Activated B cell treated with CpG ODN at 0.5 μM for 24 hours (primary cell): ENCODE measurements at regions of chr7 and their contacts with region 1.

Region 1: GRCh38 chr7:50266635-50267386 is 37.7 kb upstream of the IKZF1 start:
- DNase-seq: no peak
- ATAC-seq: peak; percentile 66
- H3K4me3 Mint-ChIP-seq: peak overlapping the region; percentile 78
- H3K27ac Mint-ChIP-seq: peak overlapping the region; percentile 87
- H3K4me1 Mint-ChIP-seq: peaks cover 99% of the 10 kb centered on the region
- H3K27me3 Mint-ChIP-seq: no peaks in the 10 kb centered on the region
- CTCF ChIP-seq: no peak

Region 2: GRCh38 chr7:49885593-49886285 is 381.1 kb before region 1 on chr7:
- CTCF ChIA-PET with region 1: no interaction called
- POLR2A ChIA-PET with region 1: no interaction called
- intact Hi-C with region 1: no loop called
- DNase-seq: no peak
- ATAC-seq: no peak
- H3K4me3 Mint-ChIP-seq: no peak overlapping the region
- H3K27ac Mint-ChIP-seq: no peak overlapping the region
- H3K4me1 Mint-ChIP-seq: no peaks in the 10 kb centered on the region
- H3K27me3 Mint-ChIP-seq: peaks cover 4% of the 10 kb centered on the region
- CTCF ChIP-seq: no peak

Region 3: GRCh38 chr7:49937608-49938007 is 329.2 kb before region 1 on chr7:
- CTCF ChIA-PET with region 1: no interaction called
- POLR2A ChIA-PET with region 1: no interaction called
- intact Hi-C with region 1: no loop called
- DNase-seq: no peak
- ATAC-seq: no peak
- H3K4me3 Mint-ChIP-seq: no peak overlapping the region
- H3K27ac Mint-ChIP-seq: no peak overlapping the region
- H3K4me1 Mint-ChIP-seq: no peaks in the 10 kb centered on the region
- H3K27me3 Mint-ChIP-seq: no peaks in the 10 kb centered on the region
- CTCF ChIP-seq: no peak

Region 4: GRCh38 chr7:50147951-50148808 is 118.6 kb before region 1 on chr7:
- CTCF ChIA-PET with region 1: interaction called, 3 read pairs
- POLR2A ChIA-PET with region 1: interaction called, 6 read pairs
- intact Hi-C with region 1: loop called (anchors 5 kb)
- DNase-seq: no peak
- ATAC-seq: peak; percentile 77
- H3K4me3 Mint-ChIP-seq: peak overlapping the region; percentile 46
- H3K27ac Mint-ChIP-seq: peak overlapping the region; percentile 95
- H3K4me1 Mint-ChIP-seq: peaks cover 93% of the 10 kb centered on the region
- H3K27me3 Mint-ChIP-seq: no peaks in the 10 kb centered on the region
- CTCF ChIP-seq: no peak

Region 5: GRCh38 chr7:50212666-50213621 is 53.9 kb before region 1 on chr7:
- CTCF ChIA-PET with region 1: interaction called, 6 read pairs
- POLR2A ChIA-PET with region 1: interaction called, 26 read pairs
- intact Hi-C with region 1: loop called (anchors 2 kb)
- DNase-seq: no peak
- ATAC-seq: peak; percentile 91
- H3K4me3 Mint-ChIP-seq: peak overlapping the region; percentile 70
- H3K27ac Mint-ChIP-seq: peak overlapping the region; percentile 84
- H3K4me1 Mint-ChIP-seq: peaks cover 63% of the 10 kb centered on the region
- H3K27me3 Mint-ChIP-seq: no peaks in the 10 kb centered on the region
- CTCF ChIP-seq: no peak

Region 6: DNA sequence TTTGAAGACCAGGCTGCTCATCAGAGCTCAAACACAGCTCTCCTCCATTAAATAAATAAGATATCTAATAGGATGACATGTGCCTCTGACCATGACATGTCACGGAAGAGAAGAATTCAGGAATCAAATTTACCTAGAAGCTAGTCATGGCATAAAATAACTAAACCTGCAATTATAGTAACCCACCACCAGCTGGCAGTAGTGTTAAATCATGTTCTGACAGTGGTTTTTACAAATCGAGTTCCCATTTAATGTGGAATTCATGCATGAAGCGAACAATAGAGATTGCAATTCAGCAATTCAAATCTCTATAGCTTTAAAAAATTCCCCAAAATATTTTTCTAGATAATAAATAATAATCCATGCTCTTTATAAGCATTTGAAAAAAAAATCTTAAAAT is 36.8 kb before region 1 on chr7:
- CTCF ChIA-PET with region 1: no interaction called
- POLR2A ChIA-PET with region 1: no interaction called
- intact Hi-C with region 1: loop called (anchors 5 kb)
- DNase-seq: no peak
- ATAC-seq: no peak
- H3K4me3 Mint-ChIP-seq: no peak overlapping the region
- H3K27ac Mint-ChIP-seq: no peak overlapping the region
- H3K4me1 Mint-ChIP-seq: peaks cover 5% of the 10 kb centered on the region
- H3K27me3 Mint-ChIP-seq: no peaks in the 10 kb centered on the region
- CTCF ChIP-seq: no peak

Region 7: DNA sequence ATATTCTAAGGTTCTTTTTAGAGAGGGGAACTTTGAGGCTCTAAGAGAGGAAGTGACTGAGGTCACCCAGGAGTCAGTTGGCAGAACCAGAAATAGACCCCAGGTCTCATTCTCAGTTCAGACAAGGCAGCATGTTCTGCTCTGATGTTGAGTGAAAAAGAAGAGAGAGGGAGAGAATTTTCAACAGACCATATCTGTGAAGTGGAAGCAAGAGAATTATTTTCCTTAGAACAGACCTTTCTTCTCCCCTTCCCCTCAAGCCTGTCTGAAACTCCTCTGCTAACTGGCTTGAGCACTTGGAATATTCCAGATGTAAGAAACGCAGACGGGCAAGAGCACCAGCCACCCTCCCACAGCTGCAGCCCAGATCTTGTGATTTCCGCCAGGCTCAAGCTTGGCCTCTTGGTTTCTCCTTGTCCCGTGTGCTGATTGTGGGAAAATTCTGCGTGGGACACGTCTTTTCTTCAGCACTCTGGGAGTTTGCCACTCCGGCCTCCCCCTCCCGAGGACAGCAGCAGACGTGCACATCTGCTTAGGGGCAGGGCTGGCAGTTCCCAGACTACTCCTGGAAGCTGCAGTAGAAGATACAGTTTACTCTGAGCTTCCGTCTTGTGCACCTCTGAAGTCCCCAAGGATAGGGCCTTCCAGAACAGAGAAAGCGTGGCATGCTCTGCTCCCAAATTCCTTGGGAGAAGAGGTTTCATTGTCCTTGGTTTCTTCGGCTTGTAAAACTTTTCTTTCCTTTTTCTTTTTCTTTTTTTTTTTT is 15.1 kb after region 1 on chr7:
- CTCF ChIA-PET with region 1: interaction called, 10 read pairs
- POLR2A ChIA-PET with region 1: interaction called, 90 read pairs
- intact Hi-C with region 1: loop called (anchors 2 kb)
- DNase-seq: no peak
- ATAC-seq: peak; percentile 89
- H3K4me3 Mint-ChIP-seq: peak overlapping the region; percentile 84
- H3K27ac Mint-ChIP-seq: peak overlapping the region; percentile 94
- H3K4me1 Mint-ChIP-seq: peaks cover 83% of the 10 kb centered on the region
- H3K27me3 Mint-ChIP-seq: no peaks in the 10 kb centered on the region
- CTCF ChIP-seq: no peak

Region 8: DNA sequence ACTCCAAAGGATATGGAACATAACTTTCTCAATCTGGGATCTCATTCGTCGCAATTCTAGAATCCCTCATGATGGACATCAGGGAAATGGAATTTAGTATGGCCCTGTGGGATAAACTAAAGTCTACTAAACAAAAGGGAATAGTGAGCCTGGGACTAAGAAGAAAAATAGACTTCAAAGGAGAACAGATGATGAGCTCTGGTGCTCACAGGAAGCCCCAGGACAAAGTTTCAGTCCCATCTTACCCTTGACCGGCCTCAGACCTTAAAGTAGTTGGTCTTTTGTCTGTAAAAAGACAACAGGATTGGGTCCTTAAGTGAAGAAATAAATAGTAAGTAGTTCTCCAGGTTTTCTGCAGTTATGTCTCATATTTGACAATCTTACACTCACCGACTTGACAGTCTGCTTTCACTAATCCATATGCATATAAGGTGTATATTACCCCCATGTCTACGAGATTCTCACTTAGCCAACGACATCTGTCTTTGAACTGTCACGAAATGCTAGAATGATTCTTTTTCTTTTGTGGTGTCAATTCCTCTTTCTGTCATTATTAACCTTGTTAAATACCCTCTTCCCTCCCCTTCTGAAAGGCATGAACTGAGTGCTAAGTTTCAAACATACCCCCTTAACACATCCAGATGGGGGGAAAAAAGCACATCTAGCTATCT is 26.8 kb after region 1 on chr7:
- CTCF ChIA-PET with region 1: interaction called, 4 read pairs
- POLR2A ChIA-PET with region 1: interaction called, 18 read pairs
- intact Hi-C with region 1: loop called (anchors 1 kb)
- DNase-seq: no peak
- ATAC-seq: peak; percentile 76
- H3K4me3 Mint-ChIP-seq: peak overlapping the region; percentile 9
- H3K27ac Mint-ChIP-seq: peak overlapping the region; percentile 85
- H3K4me1 Mint-ChIP-seq: peaks cover 33% of the 10 kb centered on the region
- H3K27me3 Mint-ChIP-seq: no peaks in the 10 kb centered on the region
- CTCF ChIP-seq: no peak

Region 9: GRCh38 chr7:50409856-50410745 is 143.3 kb after region 1 on chr7:
- CTCF ChIA-PET with region 1: no interaction called
- POLR2A ChIA-PET with region 1: interaction called, 4 read pairs
- intact Hi-C with region 1: loop called (anchors 5 kb)
- DNase-seq: peak; percentile 58
- ATAC-seq: peak; percentile 70
- H3K4me3 Mint-ChIP-seq: peak overlapping the region; percentile 56
- H3K27ac Mint-ChIP-seq: peak overlapping the region; percentile 94
- H3K4me1 Mint-ChIP-seq: peaks cover 98% of the 10 kb centered on the region
- H3K27me3 Mint-ChIP-seq: no peaks in the 10 kb centered on the region
- CTCF ChIP-seq: no peak

Region 10: DNA sequence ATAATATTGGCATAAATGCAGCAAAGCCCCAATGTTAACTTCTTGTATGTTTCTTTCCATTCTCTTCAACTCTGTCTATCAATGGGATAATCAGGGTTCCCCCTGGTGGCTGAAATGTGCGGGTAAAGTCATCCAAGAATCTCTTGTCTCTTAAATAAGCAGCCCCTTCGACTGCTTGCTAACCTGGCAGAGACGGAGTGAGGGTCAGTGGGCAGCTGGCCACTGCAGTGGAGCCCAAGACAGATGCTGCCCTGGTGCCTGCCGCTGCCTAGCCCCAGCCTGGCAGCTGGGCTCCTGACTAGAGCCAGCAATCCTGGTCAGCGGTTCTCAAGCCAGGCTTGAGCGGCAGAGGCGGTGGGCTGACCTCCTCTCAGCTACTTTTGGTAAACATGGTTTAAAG is 800.9 kb after region 1 on chr7:
- CTCF ChIA-PET with region 1: no interaction called
- POLR2A ChIA-PET with region 1: no interaction called
- intact Hi-C with region 1: no loop called
- DNase-seq: no peak
- ATAC-seq: no peak
- H3K4me3 Mint-ChIP-seq: no peak overlapping the region
- H3K27ac Mint-ChIP-seq: no peak overlapping the region
- H3K4me1 Mint-ChIP-seq: no peaks in the 10 kb centered on the region
- H3K27me3 Mint-ChIP-seq: no peaks in the 10 kb centered on the region
- CTCF ChIP-seq: no peak

Region 11: GRCh38 chr7:51138123-51139085 is 871.6 kb after region 1 on chr7:
- CTCF ChIA-PET with region 1: no interaction called
- POLR2A ChIA-PET with region 1: no interaction called
- intact Hi-C with region 1: no loop called
- DNase-seq: no peak
- ATAC-seq: no peak
- H3K4me3 Mint-ChIP-seq: no peak overlapping the region
- H3K27ac Mint-ChIP-seq: no peak overlapping the region
- H3K4me1 Mint-ChIP-seq: peaks cover 2% of the 10 kb centered on the region
- H3K27me3 Mint-ChIP-seq: peaks cover 4% of the 10 kb centered on the region
- CTCF ChIP-seq: no peak